ENCODE measurements at regions of chr19 and their contacts with region 1.

Region 1: DNA sequence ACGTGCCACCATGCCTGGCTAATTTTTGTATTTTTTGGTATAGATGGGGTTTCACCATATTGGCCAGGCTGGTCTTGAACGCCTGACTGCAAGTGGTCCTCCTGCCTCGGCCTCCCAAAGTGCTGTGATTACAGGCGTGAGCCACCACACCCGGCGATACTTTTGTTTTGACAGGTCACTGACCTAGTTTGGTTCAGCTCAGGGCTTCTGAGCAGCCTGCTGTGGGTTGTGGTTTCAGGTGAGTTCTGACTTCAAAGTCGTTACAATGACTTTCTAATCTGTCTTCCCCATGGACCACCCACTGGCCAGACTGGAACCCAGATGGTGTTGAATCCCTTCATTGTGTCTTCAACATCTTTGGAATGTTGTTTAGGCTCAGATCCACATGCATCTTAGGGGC is 73.8 kb downstream of the TRPM4 start:
- DNase-seq: no peak
- H3K4me3 ChIP-seq: no peak overlapping the region
- H3K27ac ChIP-seq: no peak overlapping the region
- H3K4me1 ChIP-seq: no peaks in the 10 kb centered on the region
- H3K27me3 ChIP-seq: no peaks in the 10 kb centered on the region
- CTCF ChIP-seq: no peak
- POLR2A ChIP-seq: no peak

Region 2: DNA sequence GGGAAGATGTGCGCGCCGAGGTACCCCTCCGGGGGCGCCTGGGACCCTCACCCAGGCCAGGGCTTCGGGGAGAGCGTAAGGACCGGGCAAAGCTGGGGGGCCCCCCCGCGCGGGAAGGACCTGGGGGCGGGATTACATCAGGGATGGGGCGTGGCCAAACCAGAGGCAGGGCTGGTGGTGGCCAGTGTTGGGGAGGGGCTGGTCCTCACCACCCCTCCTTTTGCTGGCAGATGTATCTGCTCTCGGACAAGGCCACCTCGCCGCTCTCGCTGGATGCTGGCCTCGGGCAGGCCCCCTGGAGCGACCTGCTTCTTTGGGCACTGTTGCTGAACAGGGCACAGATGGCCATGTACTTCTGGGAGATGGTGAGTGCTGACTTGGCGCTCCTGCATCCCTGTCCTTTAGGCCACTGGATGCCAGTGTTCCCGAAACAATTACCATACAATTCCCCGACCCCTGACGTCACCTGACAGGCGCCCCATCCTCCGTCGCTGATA is 48.5 kb before region 1 on chr19:
- intact Hi-C with region 1: loop called (anchors 5 kb)
- DNase-seq: no peak
- H3K4me3 ChIP-seq: no peak overlapping the region
- H3K27ac ChIP-seq: no peak overlapping the region
- H3K4me1 ChIP-seq: no peaks in the 10 kb centered on the region
- H3K27me3 ChIP-seq: no peaks in the 10 kb centered on the region
- CTCF ChIP-seq: no peak
- POLR2A ChIP-seq: no peak

Region 3: GRCh38 chr19:49309087-49309486 is 77.7 kb after region 1 on chr19:
- intact Hi-C with region 1: no loop called
- DNase-seq: no peak
- H3K4me3 ChIP-seq: no peak overlapping the region
- H3K27ac ChIP-seq: no peak overlapping the region
- H3K4me1 ChIP-seq: no peaks in the 10 kb centered on the region
- H3K27me3 ChIP-seq: no peaks in the 10 kb centered on the region
- CTCF ChIP-seq: no peak
- POLR2A ChIP-seq: no peak